ENCODE measurements at regions of chr1 and their contacts with region 1.

Region 1: DNA sequence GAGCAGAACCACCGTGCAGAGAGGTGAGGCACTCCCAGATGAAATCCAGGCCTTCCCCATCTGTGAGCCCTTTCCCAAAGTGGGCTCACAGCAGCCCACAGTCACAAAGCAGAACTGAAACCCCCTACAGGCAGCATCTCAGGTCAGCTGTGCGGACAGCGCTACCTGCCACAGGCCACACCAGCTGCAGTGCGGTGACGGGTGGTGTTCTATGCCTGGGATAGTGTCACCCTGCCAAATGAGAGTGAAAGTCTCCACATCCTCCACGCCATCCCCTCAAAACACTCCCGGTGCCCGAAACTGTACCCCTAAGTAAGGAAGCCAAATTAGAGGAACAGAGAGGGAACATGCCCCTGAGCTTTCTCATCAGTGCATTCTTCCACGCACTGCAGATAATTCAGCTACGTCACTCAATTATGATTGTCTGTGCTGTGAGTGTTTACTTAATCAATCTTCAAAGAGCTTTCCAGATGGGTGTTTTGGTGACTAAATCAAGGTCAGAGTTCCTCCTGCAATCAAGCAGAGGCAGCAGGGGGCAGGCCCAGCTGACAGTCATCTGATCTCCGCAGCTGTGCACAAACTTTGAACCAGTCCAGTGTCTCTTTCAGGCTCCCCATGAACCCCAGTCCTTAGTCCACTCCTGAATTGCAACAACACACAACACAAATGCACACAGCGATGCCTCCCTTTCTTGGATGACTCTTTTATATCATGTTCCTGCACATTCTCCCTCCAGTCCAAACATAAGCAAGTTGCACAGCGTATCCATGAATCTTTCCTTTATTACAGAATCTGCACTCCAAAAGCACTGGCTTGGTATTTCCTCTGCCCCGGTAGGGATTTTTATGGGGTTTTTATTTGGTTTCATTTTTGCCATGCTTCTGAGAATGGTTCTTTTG is 150.0 kb downstream of the TOMM20 start:
- DNase-seq: peak; percentile 77 to 89 (median 82)
- ATAC-seq: peak; percentile 75
- H3K4me3 ChIP-seq: no peak overlapping the region
- H3K4me1 ChIP-seq: peaks cover 73% of the 10 kb centered on the region
- CTCF ChIP-seq: no peak

Region 2: GRCh38 chr1:234722904-234723720 is 255.5 kb before region 1 on chr1:
- intact Hi-C with region 1: loop called in 1 of 2 experiments (anchors 10 kb)
- DNase-seq: peak; percentile 55 to 75 (median 60)
- ATAC-seq: peak; percentile 27
- H3K4me3 ChIP-seq: no peak overlapping the region
- H3K4me1 ChIP-seq: peaks cover 69% of the 10 kb centered on the region
- CTCF ChIP-seq: no peak

Region 3: GRCh38 chr1:235239851-235240250 is 261.2 kb after region 1 on chr1:
- intact Hi-C with region 1: no loop called
- DNase-seq: no peak
- ATAC-seq: no peak
- H3K4me3 ChIP-seq: no peak overlapping the region
- H3K4me1 ChIP-seq: no peaks in the 10 kb centered on the region
- CTCF ChIP-seq: no peak